ENCODE measurements at regions of chr20 and their contacts with region 1.

Region 1: DNA sequence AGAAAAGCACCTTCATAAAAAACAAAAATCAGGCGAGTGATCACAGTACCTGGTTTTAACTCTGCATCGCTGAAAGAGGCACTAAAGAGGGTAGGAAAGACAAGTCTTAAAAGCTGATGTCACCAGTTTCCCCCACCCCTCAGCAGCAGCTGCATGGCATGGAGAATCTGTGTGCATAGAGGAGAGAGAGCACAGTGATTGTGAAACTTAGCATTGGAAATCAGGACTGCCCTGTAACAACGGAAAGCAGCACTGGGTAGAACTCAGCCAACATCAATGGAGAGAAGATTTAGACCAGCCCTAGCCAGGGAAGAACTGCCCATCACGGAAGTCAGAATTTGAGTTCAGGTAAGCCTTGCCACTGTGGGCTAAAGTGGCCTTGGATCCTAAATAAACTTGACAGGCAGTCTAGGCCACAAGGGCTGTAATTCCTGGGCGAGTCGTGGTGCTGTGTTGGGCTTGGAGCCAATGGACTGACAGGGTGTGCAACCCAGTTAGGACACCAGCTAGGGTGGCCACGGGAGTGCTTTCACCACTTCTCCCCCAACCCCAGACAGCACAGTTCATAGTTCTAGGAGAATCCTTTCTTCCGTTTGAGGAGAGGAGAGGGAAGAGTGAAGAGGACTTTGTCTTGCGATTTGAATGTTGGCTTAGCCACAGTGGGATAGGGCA is 422.3 kb downstream of the DOK5 start:
- DNase-seq: no peak
- ATAC-seq: no peak
- H3K4me3 ChIP-seq: no peak overlapping the region
- H3K27ac ChIP-seq: no peak overlapping the region
- H3K4me1 ChIP-seq: no peaks in the 10 kb centered on the region
- H3K27me3 ChIP-seq: no peaks in the 10 kb centered on the region
- CTCF ChIP-seq: no peak
- EP300 ChIP-seq: no peak
- POLR2A ChIP-seq: no peak
- RAD21 ChIP-seq: no peak

Region 2: DNA sequence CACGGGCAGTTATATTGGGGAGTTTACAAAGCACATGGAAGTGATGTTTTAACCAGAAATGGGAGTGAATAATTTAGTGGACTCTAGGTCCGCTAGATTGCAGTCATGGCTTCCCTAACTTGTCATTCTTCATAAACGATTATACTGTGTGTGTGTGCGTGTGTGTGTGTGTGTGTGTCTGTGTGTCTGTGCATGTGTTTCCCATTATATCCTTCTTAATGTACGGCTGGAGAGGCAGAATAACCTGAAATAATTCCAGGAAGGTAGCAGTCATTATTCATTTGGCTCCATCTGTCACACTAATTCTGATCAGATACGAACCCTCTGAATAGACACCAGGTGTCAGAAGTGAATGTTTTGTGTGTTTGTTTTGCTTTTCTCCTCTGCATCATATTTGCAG is 49.4 kb before region 1 on chr20:
- CTCF ChIA-PET with region 1: no interaction called
- POLR2A ChIA-PET with region 1: no interaction called
- in situ Hi-C with region 1: no loop called
- intact Hi-C with region 1: no loop called
- DNase-seq: no peak
- ATAC-seq: no peak
- H3K4me3 ChIP-seq: no peak overlapping the region
- H3K27ac ChIP-seq: no peak overlapping the region
- H3K4me1 ChIP-seq: no peaks in the 10 kb centered on the region
- H3K27me3 ChIP-seq: no peaks in the 10 kb centered on the region
- CTCF ChIP-seq: no peak
- EP300 ChIP-seq: no peak
- POLR2A ChIP-seq: no peak
- RAD21 ChIP-seq: no peak

Region 3: GRCh38 chr20:55095745-55096400 is 198.2 kb after region 1 on chr20:
- CTCF ChIA-PET with region 1: no interaction called
- POLR2A ChIA-PET with region 1: no interaction called
- in situ Hi-C with region 1: loop called (anchors 10 kb)
- intact Hi-C with region 1: no loop called
- DNase-seq: no peak
- ATAC-seq: no peak
- H3K4me3 ChIP-seq: no peak overlapping the region
- H3K27ac ChIP-seq: no peak overlapping the region
- H3K4me1 ChIP-seq: no peaks in the 10 kb centered on the region
- H3K27me3 ChIP-seq: no peaks in the 10 kb centered on the region
- CTCF ChIP-seq: no peak
- EP300 ChIP-seq: no peak
- POLR2A ChIP-seq: no peak
- RAD21 ChIP-seq: no peak